ENCODE measurements at regions of chr17 and their contacts with region 1.

Region 1: DNA sequence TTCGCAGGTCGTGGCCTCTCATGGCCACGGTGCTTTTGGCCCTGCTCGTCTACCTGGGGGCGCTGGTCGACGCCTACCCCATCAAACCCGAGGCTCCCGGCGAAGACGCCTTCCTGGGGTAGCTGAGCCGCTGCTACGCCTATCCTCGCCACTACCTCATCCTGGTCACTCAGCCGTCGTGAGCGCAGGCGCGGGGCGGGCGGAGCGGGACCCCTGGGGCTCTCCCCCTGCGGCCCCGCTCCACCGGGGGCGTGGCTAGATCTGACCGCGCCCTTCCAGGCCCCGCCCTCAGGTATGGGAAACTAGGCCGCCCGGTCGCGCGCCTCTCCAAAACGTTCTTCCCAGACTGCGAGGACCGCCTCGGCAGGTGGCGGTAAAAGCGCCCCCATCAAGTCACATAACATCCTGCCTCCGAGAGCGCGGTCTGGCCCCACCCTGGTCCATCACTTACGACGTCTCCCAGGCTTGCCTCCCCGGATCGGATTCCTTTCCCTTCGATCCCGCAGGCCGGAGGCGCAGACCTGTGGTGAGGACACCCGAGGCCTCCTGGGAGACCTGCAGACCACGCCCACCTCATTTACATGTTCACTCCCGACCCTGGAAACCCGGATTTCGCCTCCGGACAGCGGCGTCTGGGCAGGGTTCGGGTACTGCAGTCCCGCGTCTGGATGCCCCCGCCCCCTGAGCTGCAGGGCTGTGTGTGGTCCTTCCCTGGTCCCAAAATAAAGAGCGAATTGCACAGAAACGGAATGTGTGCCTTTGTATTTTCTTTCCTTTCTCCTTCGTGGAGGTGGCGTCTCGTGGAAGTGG is 91.5 kb upstream of the TMEM97 start:
- DNase-seq: peak; percentile 81
- H3K4me3 ChIP-seq: peak overlapping the region in 3 of 4 donors; percentile 31 to 49 (median 37)
- H3K27ac ChIP-seq: peak overlapping the region in 3 of 4 donors; percentile 11 to 61 (median 19)
- H3K4me1 ChIP-seq: peaks cover 0 to 13% (median 11%) of the 10 kb centered on the region in 4 donors
- H3K27me3 ChIP-seq: peaks cover 32% of the 10 kb centered on the region
- CTCF ChIP-seq: peak in 1 of 5 experiments; percentile 40
- EP300 ChIP-seq: no peak
- POLR2A ChIP-seq: peak; percentile 51

Region 2: GRCh38 chr17:27793168-27793905 is 434.2 kb before region 1 on chr17:
- in situ Hi-C with region 1: loop called in 2 of 4 experiments (anchors 25 kb)
- intact Hi-C with region 1: no loop called
- DNase-seq: no peak
- H3K4me3 ChIP-seq: peak overlapping the region in 2 of 4 donors; percentile 28 to 42
- H3K27ac ChIP-seq: no peak overlapping the region
- H3K4me1 ChIP-seq: peaks cover 0 to 20% (median 11%) of the 10 kb centered on the region in 4 donors
- H3K27me3 ChIP-seq: peaks cover 30% of the 10 kb centered on the region
- CTCF ChIP-seq: no peak
- EP300 ChIP-seq: no peak
- POLR2A ChIP-seq: no peak

Region 3: GRCh38 chr17:28057731-28058279 is 169.7 kb before region 1 on chr17:
- in situ Hi-C with region 1: no loop called
- intact Hi-C with region 1: no loop called
- DNase-seq: no peak
- H3K4me3 ChIP-seq: no peak overlapping the region
- H3K27ac ChIP-seq: peak overlapping the region in 3 of 4 donors; percentile 6 to 30 (median 20)
- H3K4me1 ChIP-seq: peaks cover 0 to 59% (median 23%) of the 10 kb centered on the region in 4 donors
- H3K27me3 ChIP-seq: no peaks in the 10 kb centered on the region
- CTCF ChIP-seq: no peak
- EP300 ChIP-seq: no peak
- POLR2A ChIP-seq: no peak

Region 4: GRCh38 chr17:28180449-28180848 is 47.1 kb before region 1 on chr17:
- in situ Hi-C with region 1: no loop called
- intact Hi-C with region 1: no loop called
- DNase-seq: no peak
- H3K4me3 ChIP-seq: no peak overlapping the region
- H3K27ac ChIP-seq: no peak overlapping the region
- H3K4me1 ChIP-seq: no peaks in the 10 kb centered on the region
- H3K27me3 ChIP-seq: no peaks in the 10 kb centered on the region
- CTCF ChIP-seq: no peak
- EP300 ChIP-seq: no peak
- POLR2A ChIP-seq: no peak

Region 5: DNA sequence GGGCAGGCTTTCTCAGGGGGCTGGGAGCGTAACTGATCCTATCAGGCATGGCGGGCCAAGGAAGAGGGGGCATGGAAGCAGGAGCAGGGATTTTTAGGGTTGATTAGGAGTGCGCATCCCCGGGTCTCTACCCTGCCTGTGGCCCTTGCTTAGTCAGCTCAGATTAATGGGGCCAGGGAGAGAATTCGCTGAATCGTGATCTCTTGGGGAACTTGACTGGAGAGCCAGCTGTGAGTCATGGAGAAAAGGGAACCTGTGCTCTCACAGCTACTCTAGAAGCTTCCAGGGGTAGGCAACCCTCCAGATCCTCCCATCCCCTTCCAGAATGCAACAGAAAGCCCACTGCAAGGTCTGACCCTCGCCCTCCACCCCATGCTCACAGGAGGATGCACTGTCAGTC is 282.3 kb after region 1 on chr17:
- in situ Hi-C with region 1: no loop called
- intact Hi-C with region 1: no loop called
- DNase-seq: no peak
- H3K4me3 ChIP-seq: no peak overlapping the region
- H3K27ac ChIP-seq: no peak overlapping the region
- H3K4me1 ChIP-seq: peaks cover 0 to 15% (median 11%) of the 10 kb centered on the region in 4 donors
- H3K27me3 ChIP-seq: peaks cover 17% of the 10 kb centered on the region
- CTCF ChIP-seq: no peak
- EP300 ChIP-seq: no peak
- POLR2A ChIP-seq: no peak